CD14-positive monocyte (primary cell): ENCODE measurements at regions of chr19 and their contacts with region 1.

Region 1: GRCh38 chr19:8580710-8581281 is 3.6 kb upstream of the MYO1F start:
- DNase-seq: peak; percentile 79 to 88 (median 80)
- H3K4me3 ChIP-seq: peak overlapping the region in 1 of 3 experiments; percentile 46
- H3K4me3 Mint-ChIP-seq: no peak overlapping the region
- H3K27ac ChIP-seq: peak overlapping the region in 1 of 2 donors; percentile 14
- H3K27ac Mint-ChIP-seq: peak overlapping the region in 1 of 7 donors; percentile 80
- H3K4me1 ChIP-seq: peaks cover 37 to 39% of the 10 kb centered on the region in 2 donors
- H3K4me1 Mint-ChIP-seq: peaks cover 28% of the 10 kb centered on the region
- H3K27me3 ChIP-seq: no peaks in the 10 kb centered on the region
- H3K27me3 Mint-ChIP-seq: peaks cover 0 to 2% (median 2%) of the 10 kb centered on the region in 3 donors
- CTCF ChIP-seq: peak; percentile 100

Region 2: GRCh38 chr19:8412783-8413628 is 167.8 kb before region 1 on chr19 and contains the start of gene MARCHF2:
- intact Hi-C with region 1: loop called in 1 of 2 experiments (anchors 5 kb)
- DNase-seq: peak; percentile 96 to 97 (median 97)
- H3K4me3 ChIP-seq: peak within 1 kb of the TSS; percentile 75 to 93 (median 91)
- H3K4me3 Mint-ChIP-seq: peak within 1 kb of the TSS; percentile 73 to 84
- H3K27ac ChIP-seq: peak within 1 kb of the TSS in 1 of 2 donors; percentile 73
- H3K27ac Mint-ChIP-seq: peak within 1 kb of the TSS in 3 of 7 donors; percentile 3 to 86 (median 40)
- H3K4me1 ChIP-seq: peaks cover 10 to 19% of the 10 kb centered on the region in 2 donors
- H3K4me1 Mint-ChIP-seq: peaks cover 19% of the 10 kb centered on the region
- H3K27me3 ChIP-seq: no peaks in the 10 kb centered on the region
- H3K27me3 Mint-ChIP-seq: peaks cover 0 to 2% (median 2%) of the 10 kb centered on the region in 3 donors
- CTCF ChIP-seq: peak; percentile 75
- polyA plus RNA-seq, gene MARCHF2: 47.8 to 117 (median 90.8) TPM

Region 3: GRCh38 chr19:8569066-8569771 is 11.6 kb before region 1 on chr19:
- intact Hi-C with region 1: loop called in 1 of 2 experiments (anchors 1 kb)
- DNase-seq: peak; percentile 96 to 97 (median 96)
- H3K4me3 ChIP-seq: peak overlapping the region; percentile 7 to 100 (median 16)
- H3K4me3 Mint-ChIP-seq: peak overlapping the region; percentile 73 to 88
- H3K27ac ChIP-seq: peak overlapping the region; percentile 90 to 92
- H3K27ac Mint-ChIP-seq: peak overlapping the region; percentile 97 to 99 (median 99)
- H3K4me1 ChIP-seq: peaks cover 99 to 100% of the 10 kb centered on the region in 2 donors
- H3K4me1 Mint-ChIP-seq: peaks cover 91% of the 10 kb centered on the region
- H3K27me3 ChIP-seq: no peaks in the 10 kb centered on the region
- H3K27me3 Mint-ChIP-seq: peaks cover 0 to 5% (median 1%) of the 10 kb centered on the region in 3 donors
- CTCF ChIP-seq: no peak

Region 4: GRCh38 chr19:8697671-8698432 is 117.1 kb after region 1 on chr19:
- intact Hi-C with region 1: loop called (anchors 1 to 2 kb)
- DNase-seq: no peak
- H3K4me3 ChIP-seq: no peak overlapping the region
- H3K4me3 Mint-ChIP-seq: no peak overlapping the region
- H3K27ac ChIP-seq: no peak overlapping the region
- H3K27ac Mint-ChIP-seq: no peak overlapping the region
- H3K4me1 ChIP-seq: peaks cover 15 to 23% of the 10 kb centered on the region in 2 donors
- H3K4me1 Mint-ChIP-seq: peaks cover 25% of the 10 kb centered on the region
- H3K27me3 ChIP-seq: no peaks in the 10 kb centered on the region
- H3K27me3 Mint-ChIP-seq: peaks cover 18 to 54% (median 25%) of the 10 kb centered on the region in 3 donors
- CTCF ChIP-seq: peak; percentile 16

Region 5: DNA sequence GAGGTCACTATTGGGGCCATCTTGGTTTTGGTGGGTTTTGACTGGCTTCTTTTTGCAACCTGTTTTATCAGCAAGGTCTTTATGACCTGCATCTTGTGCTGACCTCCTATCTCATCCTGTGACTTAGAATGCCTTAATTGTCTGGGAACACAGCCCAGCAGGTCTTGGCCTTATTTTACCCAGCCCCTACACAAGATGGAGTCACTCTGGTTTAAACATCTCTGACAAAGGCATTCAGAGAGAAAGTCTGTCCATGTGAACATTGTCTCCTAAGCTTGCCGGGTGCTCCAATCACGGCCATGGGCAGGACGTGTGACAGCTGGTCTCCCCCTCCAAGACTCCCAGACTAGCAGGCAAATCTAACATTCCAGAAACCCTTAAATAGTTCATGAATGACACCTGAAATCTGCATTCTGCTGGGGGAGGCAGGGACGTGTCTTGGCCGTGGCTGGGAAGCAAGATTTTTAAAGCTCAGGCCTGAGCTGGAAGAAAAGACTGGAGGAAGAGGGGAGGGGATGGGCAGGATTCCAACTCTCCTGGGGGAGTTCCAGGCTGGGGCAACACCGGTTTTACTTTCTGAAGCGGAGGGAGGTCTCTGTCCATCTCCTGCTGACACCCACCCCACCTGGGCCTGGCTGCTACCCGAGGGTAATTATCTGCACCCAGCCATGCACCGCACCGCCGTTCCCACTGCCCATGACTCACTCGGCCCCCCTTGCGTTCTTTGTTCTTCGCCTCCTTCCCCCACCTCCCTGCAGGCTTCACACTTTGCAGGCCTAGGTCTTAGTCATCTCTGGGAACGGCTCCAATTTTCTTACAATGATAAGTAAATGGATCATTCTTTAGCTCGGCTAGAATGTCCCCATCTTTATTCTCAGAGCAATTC is 494.5 kb after region 1 on chr19:
- intact Hi-C with region 1: loop called in 1 of 2 experiments (anchors 10 kb)
- DNase-seq: peak in 1 of 3 donors; percentile 8
- H3K4me3 ChIP-seq: no peak overlapping the region
- H3K4me3 Mint-ChIP-seq: no peak overlapping the region
- H3K27ac ChIP-seq: no peak overlapping the region
- H3K27ac Mint-ChIP-seq: no peak overlapping the region
- H3K4me1 ChIP-seq: no peaks in the 10 kb centered on the region
- H3K4me1 Mint-ChIP-seq: no peaks in the 10 kb centered on the region
- H3K27me3 ChIP-seq: no peaks in the 10 kb centered on the region
- H3K27me3 Mint-ChIP-seq: peaks cover 0 to 10% (median 0%) of the 10 kb centered on the region in 3 donors
- CTCF ChIP-seq: no peak